SK-N-SH (cell line): ENCODE measurements at regions of chr5 and their contacts with region 1.

Region 1: DNA sequence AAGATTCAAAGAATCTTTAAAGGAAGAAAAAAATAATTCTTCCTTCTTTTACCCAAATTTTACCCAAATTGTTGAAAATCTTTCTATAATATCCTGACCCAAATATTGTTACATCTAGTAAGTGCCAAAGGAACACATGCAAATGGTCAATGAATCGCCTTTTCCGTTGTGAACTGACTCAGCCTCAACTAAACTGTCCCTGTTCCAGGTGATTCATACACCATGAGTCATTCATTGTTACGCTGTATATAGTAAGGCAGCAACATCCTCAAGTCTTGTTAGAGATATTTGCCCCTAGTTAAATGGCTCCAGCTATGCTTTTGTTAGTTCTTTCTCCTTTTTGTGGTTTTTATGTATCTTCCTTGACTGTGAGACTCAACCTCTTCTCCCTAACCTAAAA is 9.7 kb downstream of the PTGER4 start:
- DNase-seq: no peak
- H3K4me3 ChIP-seq: no peak overlapping the region
- H3K27ac ChIP-seq: peak overlapping the region in 1 of 2 experiments; percentile 43; a peak in 2 of 4 replicates
- H3K4me1 ChIP-seq: no peaks in the 10 kb centered on the region; a peak in 1 of 4 replicates
- H3K27me3 ChIP-seq: peaks cover 7% of the 10 kb centered on the region; the same call in 1 of the 2 replicates
- CTCF ChIP-seq: no peak
- EP300 ChIP-seq: peak in 1 of 2 experiments; percentile 51; a peak in 1 of 4 replicates
- RAD21 ChIP-seq: no peak

Region 2: DNA sequence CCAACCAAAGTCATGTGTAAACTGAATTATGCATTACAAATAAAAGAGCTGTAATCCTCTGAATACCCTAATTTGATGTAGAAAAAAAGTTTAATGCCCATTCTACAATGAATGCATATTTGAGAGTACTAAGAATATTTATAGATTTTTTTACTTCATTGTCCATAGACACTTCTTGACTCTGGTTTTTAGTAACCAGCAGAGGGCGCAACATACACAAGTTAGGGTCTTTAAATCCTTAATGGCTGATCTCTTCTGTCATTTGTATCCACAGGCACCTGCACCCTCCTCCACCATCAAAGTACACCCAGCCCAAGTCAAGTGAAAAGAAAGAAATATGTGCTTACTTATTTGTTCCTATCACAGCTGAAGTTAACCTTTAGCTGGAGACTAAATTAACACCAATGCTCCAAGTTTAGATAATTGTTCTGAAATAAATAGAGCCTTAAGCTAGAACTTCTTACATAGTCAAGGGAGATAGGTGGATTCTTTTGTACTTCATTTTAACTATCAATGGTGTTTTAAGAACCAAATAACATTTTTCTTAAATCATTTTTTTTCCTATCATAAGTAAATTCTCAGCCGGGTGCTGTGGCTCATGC is 740.5 kb before region 1 on chr5:
- CTCF ChIA-PET with region 1: interaction called, 22 read pairs
- POLR2A ChIA-PET with region 1: no interaction called
- DNase-seq: peak; percentile 30
- H3K4me3 ChIP-seq: no peak overlapping the region; a peak in 1 of 4 replicates
- H3K27ac ChIP-seq: no peak overlapping the region
- H3K4me1 ChIP-seq: no peaks in the 10 kb centered on the region
- H3K27me3 ChIP-seq: no peaks in the 10 kb centered on the region
- CTCF ChIP-seq: peak; percentile 78
- EP300 ChIP-seq: no peak
- RAD21 ChIP-seq: peak; percentile 70